Vagina (tissue), 2 donors: ENCODE measurements at regions of chr17 and their contacts with region 1.

Region 1: GRCh38 chr17:7844292-7845154 is 10.3 kb upstream of the TMEM88 start:
- DNase-seq: peak in 1 of 2 donors; percentile 98
- H3K4me3 ChIP-seq: peak overlapping the region; percentile 58 to 69
- H3K27ac ChIP-seq: peak overlapping the region; percentile 99
- H3K4me1 ChIP-seq: peaks cover 54% of the 10 kb centered on the region
- H3K27me3 ChIP-seq: no peaks in the 10 kb centered on the region
- CTCF ChIP-seq: no peak
- POLR2A ChIP-seq: peak in 1 of 2 donors; percentile 65

Region 2: GRCh38 chr17:7579001-7579808 is 265.3 kb before region 1 on chr17 and contains the start of gene CD68:
- intact Hi-C with region 1: loop called (anchors 5 kb)
- DNase-seq: peak in 1 of 2 donors; percentile 90
- H3K4me3 ChIP-seq: peak within 1 kb of the TSS; percentile 25 to 28
- H3K27ac ChIP-seq: peak within 1 kb of the TSS; percentile 97
- H3K4me1 ChIP-seq: peaks cover 73% of the 10 kb centered on the region
- H3K27me3 ChIP-seq: no peaks in the 10 kb centered on the region
- CTCF ChIP-seq: no peak
- POLR2A ChIP-seq: peak in 1 of 2 donors; percentile 65
- total RNA-seq, gene CD68: 40.0 TPM

Region 3: GRCh38 chr17:7809086-7809790 is 35.3 kb before region 1 on chr17:
- intact Hi-C with region 1: loop called (anchors 1 kb)
- DNase-seq: no peak
- H3K4me3 ChIP-seq: no peak overlapping the region
- H3K27ac ChIP-seq: no peak overlapping the region
- H3K4me1 ChIP-seq: no peaks in the 10 kb centered on the region
- H3K27me3 ChIP-seq: no peaks in the 10 kb centered on the region
- CTCF ChIP-seq: no peak
- POLR2A ChIP-seq: no peak

Region 4: DNA sequence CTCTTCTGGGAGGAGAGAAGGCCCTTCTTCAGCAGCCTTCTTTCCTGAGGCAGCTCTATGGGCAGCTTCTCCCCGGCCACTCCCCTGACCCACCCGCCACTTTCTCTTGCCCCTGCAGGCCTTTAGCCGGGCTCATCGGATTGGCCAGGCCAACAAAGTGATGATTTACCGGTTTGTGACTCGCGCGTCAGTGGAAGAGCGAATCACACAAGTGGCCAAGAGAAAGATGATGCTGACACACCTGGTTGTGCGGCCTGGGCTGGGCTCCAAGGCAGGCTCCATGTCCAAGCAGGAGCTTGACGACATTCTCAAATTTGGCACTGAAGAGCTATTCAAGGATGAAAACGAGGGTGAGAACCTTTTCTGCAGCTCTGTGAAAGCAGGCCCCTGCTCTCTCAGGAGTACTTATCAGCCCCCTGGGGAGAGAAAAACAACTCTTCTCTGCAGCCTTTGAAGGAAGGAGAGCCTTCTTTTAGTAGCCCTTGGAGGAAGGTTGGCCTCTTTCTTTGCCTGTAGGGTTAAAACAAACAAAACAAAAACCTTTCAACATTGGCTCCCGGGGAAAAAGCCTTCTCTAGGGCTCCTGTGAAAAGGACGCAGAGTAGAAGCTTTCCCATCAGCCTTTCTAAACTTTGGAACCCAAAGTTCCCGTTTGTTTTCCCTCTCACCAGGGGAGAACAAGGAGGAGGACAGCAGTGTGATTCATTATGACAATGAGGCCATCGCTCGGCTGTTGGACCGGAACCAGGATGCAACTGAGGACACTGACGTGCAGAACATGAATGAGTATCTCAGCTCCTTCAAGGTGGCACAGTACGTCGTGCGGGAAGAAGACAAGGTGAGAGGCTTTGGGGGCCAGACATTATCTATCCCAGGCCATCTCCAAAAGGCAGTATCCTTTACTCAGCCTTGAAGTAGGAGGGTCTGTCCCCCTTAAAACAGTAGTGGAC is 58.9 kb after region 1 on chr17:
- intact Hi-C with region 1: no loop called
- DNase-seq: no peak
- H3K4me3 ChIP-seq: no peak overlapping the region
- H3K27ac ChIP-seq: no peak overlapping the region
- H3K4me1 ChIP-seq: no peaks in the 10 kb centered on the region
- H3K27me3 ChIP-seq: no peaks in the 10 kb centered on the region
- CTCF ChIP-seq: no peak
- POLR2A ChIP-seq: no peak

Region 5: DNA sequence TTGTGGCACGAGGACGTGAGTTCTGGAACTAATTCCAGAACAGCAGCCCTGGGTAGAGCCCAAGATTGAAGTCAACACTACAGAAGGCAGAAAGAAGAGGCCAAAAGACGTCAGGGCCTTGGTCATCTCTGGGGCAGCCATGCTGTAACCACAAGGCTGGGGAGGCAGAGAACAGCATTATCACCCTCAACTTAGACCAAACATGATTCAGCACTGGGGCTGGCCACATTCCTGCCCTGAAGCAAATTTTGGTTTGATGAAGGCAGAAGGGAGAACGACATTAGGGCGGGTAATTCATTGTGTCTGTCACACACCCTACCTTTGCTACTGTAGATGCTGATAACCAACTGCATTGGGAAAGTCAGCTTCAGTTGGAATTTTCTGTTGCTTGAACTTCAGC is 184.6 kb after region 1 on chr17:
- intact Hi-C with region 1: no loop called
- DNase-seq: no peak
- H3K4me3 ChIP-seq: no peak overlapping the region
- H3K27ac ChIP-seq: no peak overlapping the region
- H3K4me1 ChIP-seq: no peaks in the 10 kb centered on the region
- H3K27me3 ChIP-seq: no peaks in the 10 kb centered on the region
- CTCF ChIP-seq: no peak
- POLR2A ChIP-seq: no peak